Activated T-helper 2 cell treated with anti-CD3 and anti-CD28 coated beads, Interferon-gamma antibody, Interleukin-2, Interleukin-4, amounts not matched to agents 10 μg/mL and 5 μg/mL and 100 μg/mL, durations not matched to agents 14 hours and 24 hours and 36 hours (primary cell): ENCODE measurements at regions of chr12 and their contacts with region 1.

Region 1: GRCh38 chr12:94140556-94140955 is 7.8 kb upstream of the PLXNC1 start:
- DNase-seq: peak; percentile 35
- H3K4me3 Mint-ChIP-seq: no peak overlapping the region
- H3K27ac Mint-ChIP-seq: no peak overlapping the region
- H3K4me1 Mint-ChIP-seq: peaks cover 9% of the 10 kb centered on the region
- H3K27me3 Mint-ChIP-seq: peaks cover 19% of the 10 kb centered on the region

Region 2: GRCh38 chr12:94152292-94153078 is 11.9 kb after region 1 on chr12:
- intact Hi-C with region 1: no loop called
- DNase-seq: no peak
- H3K4me3 Mint-ChIP-seq: no peak overlapping the region
- H3K27ac Mint-ChIP-seq: no peak overlapping the region
- H3K4me1 Mint-ChIP-seq: peaks cover 26% of the 10 kb centered on the region
- H3K27me3 Mint-ChIP-seq: peaks cover 28% of the 10 kb centered on the region

Region 3: DNA sequence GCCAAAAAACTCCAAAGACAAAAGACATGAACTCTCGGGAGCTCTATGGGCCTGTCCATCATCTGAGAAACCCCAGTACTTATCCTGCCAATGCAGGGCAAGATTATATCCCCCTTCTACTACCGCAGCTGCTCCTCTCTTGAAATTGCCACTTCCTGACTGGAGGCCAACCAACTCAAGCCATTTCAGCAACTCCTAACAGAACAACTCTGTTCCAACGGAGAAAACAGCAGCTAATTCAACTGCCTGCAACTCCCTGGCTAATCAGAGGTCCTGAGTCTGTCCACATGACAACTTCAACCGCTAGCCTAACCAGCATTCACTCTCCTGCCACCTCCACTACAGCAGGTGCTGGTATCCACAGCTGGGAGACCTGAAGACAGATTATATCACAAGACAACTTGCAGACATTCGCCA is 295.0 kb after region 1 on chr12:
- intact Hi-C with region 1: loop called (anchors 2 kb)
- DNase-seq: no peak
- H3K4me3 Mint-ChIP-seq: no peak overlapping the region
- H3K27ac Mint-ChIP-seq: no peak overlapping the region
- H3K4me1 Mint-ChIP-seq: peaks cover 18% of the 10 kb centered on the region
- H3K27me3 Mint-ChIP-seq: no peaks in the 10 kb centered on the region